ENCODE measurements at regions of chr14 and their contacts with region 1.

Region 1: GRCh38 chr14:24741871-24742270 is 107.9 kb upstream of the GZMB start:
- DNase-seq: no peak
- ATAC-seq: no peak
- H3K4me3 ChIP-seq: no peak overlapping the region
- H3K27ac ChIP-seq: no peak overlapping the region
- H3K4me1 ChIP-seq: no peaks in the 10 kb centered on the region
- H3K27me3 ChIP-seq: no peaks in the 10 kb centered on the region
- CTCF ChIP-seq: no peak
- POLR2A ChIP-seq: no peak

Region 2: GRCh38 chr14:24774187-24774915 is 32.5 kb after region 1 on chr14:
- intact Hi-C with region 1: no loop called
- DNase-seq: peak in 1 of 5 donors; percentile 19
- ATAC-seq: peak; percentile 71 to 97 (median 81)
- H3K4me3 ChIP-seq: no peak overlapping the region
- H3K27ac ChIP-seq: peak overlapping the region in 9 of 12 donors; percentile 57 to 81 (median 73)
- H3K4me1 ChIP-seq: peaks cover 0 to 20% (median 9%) of the 10 kb centered on the region in 12 donors
- H3K27me3 ChIP-seq: no peaks in the 10 kb centered on the region
- CTCF ChIP-seq: no peak
- POLR2A ChIP-seq: no peak

Region 3: GRCh38 chr14:24798911-24799462 is 57.1 kb after region 1 on chr14:
- intact Hi-C with region 1: loop called in 4 of 10 experiments (anchors 5 to 10 kb)
- DNase-seq: no peak
- ATAC-seq: no peak
- H3K4me3 ChIP-seq: no peak overlapping the region
- H3K27ac ChIP-seq: no peak overlapping the region
- H3K4me1 ChIP-seq: no peaks in the 10 kb centered on the region
- H3K27me3 ChIP-seq: no peaks in the 10 kb centered on the region
- CTCF ChIP-seq: no peak
- POLR2A ChIP-seq: no peak

Measured in heart left ventricle (tissue), 16 donors.